Breast epithelium (tissue), 4 donors: ENCODE measurements at regions of chr6 and their contacts with region 1.

Region 1: DNA sequence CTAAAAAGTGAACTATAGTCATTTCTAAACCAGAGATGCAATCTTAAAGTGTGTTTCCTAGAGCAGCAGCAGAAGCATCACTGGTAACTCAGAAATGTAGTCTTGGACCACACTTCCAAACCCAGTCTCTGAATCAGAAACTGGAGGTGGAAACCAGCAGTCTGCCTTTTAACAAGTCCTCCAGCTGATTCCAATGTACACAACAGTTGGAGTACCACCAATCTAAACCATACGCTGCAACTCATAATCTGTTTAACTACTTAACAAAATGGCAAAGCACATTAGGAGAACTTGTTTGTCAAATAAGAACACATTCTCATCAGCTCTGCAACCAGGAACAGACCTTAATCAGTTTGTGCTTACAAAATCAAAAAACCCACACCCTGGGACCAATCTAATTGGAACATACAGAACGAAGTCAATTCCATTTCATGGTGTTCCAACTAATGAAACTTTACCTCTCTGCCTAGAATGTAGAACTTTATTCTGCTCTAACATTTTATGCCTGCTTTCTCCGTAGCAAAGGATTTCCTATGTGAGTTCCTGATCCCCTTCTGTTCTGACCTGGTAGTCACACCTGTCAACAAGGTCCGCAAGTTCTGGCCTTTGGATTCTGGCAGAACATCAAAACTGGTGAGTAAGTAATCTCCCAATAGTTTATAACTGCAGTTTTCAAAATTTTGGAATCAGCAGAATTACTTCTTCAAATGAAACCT is 390.4 kb downstream of the HTR1B start:
- DNase-seq: no peak
- H3K4me3 ChIP-seq: no peak overlapping the region
- H3K27ac ChIP-seq: no peak overlapping the region
- H3K4me1 ChIP-seq: no peaks in the 10 kb centered on the region
- H3K27me3 ChIP-seq: no peaks in the 10 kb centered on the region
- CTCF ChIP-seq: no peak
- POLR2A ChIP-seq: no peak

Region 2: DNA sequence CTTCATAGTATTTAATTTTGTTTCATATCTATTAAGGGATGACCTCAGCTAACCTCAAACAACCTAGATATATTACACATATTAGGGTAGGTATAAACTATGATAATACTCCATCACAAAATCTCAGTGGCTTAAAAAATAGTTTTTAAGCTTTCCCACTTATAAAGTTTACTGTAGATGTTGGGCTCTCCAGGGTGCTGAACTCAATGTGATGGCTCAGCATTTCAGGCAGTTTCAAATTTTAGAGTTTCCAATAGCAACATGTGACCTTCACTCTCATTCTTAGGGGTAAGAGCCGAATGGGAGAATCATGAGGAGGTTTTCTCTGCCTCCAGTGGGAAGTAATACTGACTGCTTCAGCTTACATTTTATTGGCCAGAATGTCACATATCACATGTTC is 937.3 kb after region 1 on chr6:
- intact Hi-C with region 1: loop called (anchors 5 kb)
- DNase-seq: no peak
- H3K4me3 ChIP-seq: no peak overlapping the region
- H3K27ac ChIP-seq: no peak overlapping the region
- H3K4me1 ChIP-seq: no peaks in the 10 kb centered on the region
- H3K27me3 ChIP-seq: no peaks in the 10 kb centered on the region
- CTCF ChIP-seq: no peak
- POLR2A ChIP-seq: no peak